Gastrocnemius medialis (tissue), 4 donors: ENCODE measurements at regions of chr2 and their contacts with region 1.

Region 1: DNA sequence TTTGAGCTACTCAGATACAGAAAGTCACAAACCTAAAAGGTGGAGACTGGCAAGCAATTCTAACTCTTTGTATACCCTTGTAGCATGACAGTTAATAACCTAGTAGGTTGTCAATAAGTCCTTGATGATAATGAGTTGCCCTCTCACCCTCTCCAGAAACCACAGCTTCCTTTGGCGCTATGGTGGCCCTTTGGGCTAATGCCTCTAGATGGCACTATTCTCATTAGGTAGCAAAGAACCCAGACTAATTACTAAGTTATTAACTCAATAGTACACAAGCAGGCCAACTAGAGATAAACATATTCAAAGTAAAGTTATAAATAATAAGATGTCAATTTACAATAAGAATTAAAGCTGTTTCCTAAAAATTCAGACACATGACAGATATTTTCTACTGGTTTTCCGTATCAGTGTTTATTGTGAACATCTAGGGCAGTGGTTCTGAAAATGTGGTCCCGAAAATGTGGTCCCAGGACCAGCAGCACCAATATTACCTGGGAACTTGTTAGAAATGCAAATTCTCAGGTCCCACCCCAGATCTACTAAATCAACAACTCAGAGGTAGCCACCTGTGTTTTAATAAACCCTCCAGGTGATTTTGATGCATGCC is 41.1 kb downstream of the LDAH start:
- DNase-seq: no peak
- ATAC-seq: no peak
- H3K4me3 ChIP-seq: no peak overlapping the region
- H3K27ac ChIP-seq: no peak overlapping the region
- H3K4me1 ChIP-seq: no peaks in the 10 kb centered on the region
- H3K27me3 ChIP-seq: no peaks in the 10 kb centered on the region
- CTCF ChIP-seq: peak in 3 of 5 experiments; percentile 13 to 40 (median 28)
- POLR2A ChIP-seq: no peak

Region 2: GRCh38 chr2:19435815-19436214 is 1345.9 kb before region 1 on chr2:
- in situ Hi-C with region 1: no loop called
- intact Hi-C with region 1: no loop called
- DNase-seq: no peak
- ATAC-seq: no peak
- H3K4me3 ChIP-seq: no peak overlapping the region
- H3K27ac ChIP-seq: no peak overlapping the region
- H3K4me1 ChIP-seq: no peaks in the 10 kb centered on the region
- H3K27me3 ChIP-seq: no peaks in the 10 kb centered on the region
- CTCF ChIP-seq: no peak
- POLR2A ChIP-seq: no peak

Region 3: GRCh38 chr2:20707601-20708000 is 74.2 kb before region 1 on chr2:
- in situ Hi-C with region 1: no loop called
- intact Hi-C with region 1: no loop called
- DNase-seq: no peak
- ATAC-seq: no peak
- H3K4me3 ChIP-seq: no peak overlapping the region
- H3K27ac ChIP-seq: no peak overlapping the region
- H3K4me1 ChIP-seq: no peaks in the 10 kb centered on the region
- H3K27me3 ChIP-seq: no peaks in the 10 kb centered on the region
- CTCF ChIP-seq: no peak
- POLR2A ChIP-seq: no peak

Region 4: DNA sequence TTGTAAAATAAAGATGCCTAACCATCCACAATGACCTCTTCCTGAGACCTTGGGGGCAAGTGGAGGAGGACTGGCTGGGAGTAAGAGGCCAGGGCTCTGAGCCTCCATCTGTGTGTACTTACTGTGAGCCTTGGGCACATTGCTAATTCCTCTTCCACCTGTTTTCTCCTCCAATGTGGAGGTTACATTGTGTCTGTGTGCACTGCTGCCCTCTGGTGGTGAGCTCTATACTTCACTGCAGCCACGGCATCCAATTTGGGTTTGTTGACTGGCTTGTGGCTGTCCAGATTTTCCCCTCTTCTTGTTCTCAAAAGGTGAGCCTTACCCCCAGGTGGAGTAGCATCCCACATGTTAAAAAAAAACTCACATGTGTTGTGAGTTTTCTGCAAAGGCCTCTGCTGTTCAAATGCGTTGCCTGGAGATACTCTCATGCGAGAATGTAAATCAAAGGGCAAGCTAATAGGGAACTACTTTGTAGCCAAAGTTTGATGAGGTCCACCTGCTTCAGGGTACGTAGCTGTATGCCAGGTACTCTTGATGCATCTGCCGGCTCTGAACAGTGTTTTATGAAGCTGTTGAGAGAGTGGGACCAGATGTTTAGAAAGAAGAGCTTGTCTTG is 181.3 kb after region 1 on chr2:
- in situ Hi-C with region 1: loop called in 2 of 4 experiments (anchors 10 kb)
- intact Hi-C with region 1: loop called (anchors 2 kb)
- DNase-seq: peak; percentile 40 to 56
- ATAC-seq: peak; percentile 83 to 90
- H3K4me3 ChIP-seq: no peak overlapping the region
- H3K27ac ChIP-seq: no peak overlapping the region
- H3K4me1 ChIP-seq: peaks cover 6 to 9% of the 10 kb centered on the region in 2 donors
- H3K27me3 ChIP-seq: no peaks in the 10 kb centered on the region
- CTCF ChIP-seq: peak; percentile 55 to 86 (median 83)
- POLR2A ChIP-seq: no peak